Activated CD8-positive, alpha-beta T cell treated with anti-CD3 and anti-CD28 coated beads, Interleukin-2, amount 10 ng/mL, durations not matched to agents 7 days and 5 days (primary cell): ENCODE measurements at regions of chr15 and their contacts with region 1.

Region 1: GRCh38 chr15:63504247-63504978 is at the start of gene USP3:
- DNase-seq: peak; percentile 94
- ATAC-seq: peak; percentile 66
- H3K4me3 Mint-ChIP-seq: peak within 1 kb of the TSS; percentile 89
- H3K27ac Mint-ChIP-seq: peak within 1 kb of the TSS; percentile 98
- H3K4me1 Mint-ChIP-seq: peaks cover 81% of the 10 kb centered on the region
- H3K27me3 Mint-ChIP-seq: no peaks in the 10 kb centered on the region
- total RNA-seq, gene USP3: 48.3 to 49.1 TPM

Region 2: GRCh38 chr15:63381301-63382204 is 122.9 kb before region 1 on chr15 and contains the start of gene CA12:
- CTCF ChIA-PET with region 1: no interaction called
- POLR2A ChIA-PET with region 1: no interaction called
- DNase-seq: peak; percentile 28
- ATAC-seq: peak; percentile 88
- H3K4me3 Mint-ChIP-seq: peak within 1 kb of the TSS; percentile 56
- H3K27ac Mint-ChIP-seq: no peak within 1 kb of the TSS
- H3K4me1 Mint-ChIP-seq: peaks cover 11% of the 10 kb centered on the region
- H3K27me3 Mint-ChIP-seq: peaks cover 67% of the 10 kb centered on the region
- total RNA-seq, gene CA12: not detected

Region 3: DNA sequence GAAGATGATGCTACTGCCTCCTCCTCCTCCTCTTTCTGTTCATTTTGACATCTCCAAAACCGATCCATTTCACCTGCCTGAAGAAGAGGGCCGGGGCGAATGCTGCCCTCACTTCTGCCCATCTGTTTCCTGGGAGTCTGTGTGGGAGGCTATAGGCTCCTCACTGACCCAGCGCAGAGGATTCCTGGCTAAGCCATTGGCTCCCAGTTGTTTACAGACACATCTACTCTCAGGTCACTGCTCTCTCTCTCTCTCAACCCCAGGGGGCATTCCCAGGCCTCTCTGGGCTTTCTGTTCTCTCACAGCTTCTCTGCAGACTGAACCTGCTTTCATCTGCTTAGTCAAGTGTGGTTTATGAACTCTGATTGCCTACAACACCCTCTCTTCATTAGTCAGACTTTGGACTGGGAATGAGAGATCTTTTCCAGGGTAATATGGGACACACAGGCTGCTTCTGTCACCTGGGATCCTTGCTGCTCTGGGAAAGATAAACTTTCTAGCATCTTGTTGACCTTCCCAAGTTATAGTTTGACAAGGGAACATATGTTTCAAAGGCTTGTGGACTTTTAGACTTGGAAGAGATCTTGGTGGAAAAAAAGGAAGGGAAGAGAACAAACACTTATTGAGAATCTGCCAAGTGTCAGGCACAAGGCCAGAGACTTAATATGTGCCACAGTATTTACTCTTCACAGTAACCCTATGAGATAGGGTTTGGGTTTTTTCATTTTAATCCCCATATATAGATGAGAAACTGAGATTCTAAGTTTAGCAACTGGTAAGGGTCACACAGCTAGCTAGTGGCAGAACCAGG is 30.2 kb before region 1 on chr15:
- CTCF ChIA-PET with region 1: interaction called, 27 read pairs
- POLR2A ChIA-PET with region 1: interaction called, 36 read pairs
- DNase-seq: no peak
- ATAC-seq: peak; percentile 47
- H3K4me3 Mint-ChIP-seq: no peak overlapping the region
- H3K27ac Mint-ChIP-seq: peak overlapping the region; percentile 54
- H3K4me1 Mint-ChIP-seq: peaks cover 32% of the 10 kb centered on the region
- H3K27me3 Mint-ChIP-seq: no peaks in the 10 kb centered on the region

Region 4: DNA sequence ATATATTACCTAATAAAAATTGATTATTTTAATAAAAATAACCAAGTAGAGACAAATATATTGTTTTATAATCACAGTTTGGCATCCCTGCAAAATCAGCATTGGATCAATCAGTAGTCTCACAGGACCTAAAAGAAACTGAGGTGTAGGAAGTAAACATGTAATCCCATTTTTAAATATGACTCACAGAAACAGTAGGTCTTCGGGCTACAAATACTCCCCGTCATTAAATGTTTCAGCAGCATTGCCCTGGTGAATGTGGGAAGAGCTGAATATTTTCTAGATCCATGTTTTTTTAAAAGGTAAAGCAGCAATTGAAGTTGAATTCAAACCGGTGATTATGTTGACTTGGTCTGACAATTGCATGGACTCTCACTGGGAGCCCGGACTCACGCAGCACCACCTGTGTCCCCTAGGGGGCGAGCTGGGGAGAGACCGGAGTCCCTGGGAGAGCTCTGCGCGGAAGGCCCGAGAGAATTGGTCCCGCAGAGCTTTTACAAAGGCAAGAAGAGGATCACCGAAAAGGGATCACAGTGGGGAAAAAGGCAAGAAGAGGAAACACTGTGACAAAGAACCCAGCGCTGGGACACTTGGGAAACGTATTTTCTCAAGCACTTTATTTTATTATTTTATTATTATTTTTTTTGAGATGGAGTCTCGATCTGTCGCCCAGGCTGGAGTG is 17.2 kb before region 1 on chr15:
- CTCF ChIA-PET with region 1: interaction called, 172 read pairs
- POLR2A ChIA-PET with region 1: interaction called, 21 read pairs
- DNase-seq: peak; percentile 92
- ATAC-seq: peak; percentile 96
- H3K4me3 Mint-ChIP-seq: no peak overlapping the region
- H3K27ac Mint-ChIP-seq: peak overlapping the region; percentile 62
- H3K4me1 Mint-ChIP-seq: peaks cover 53% of the 10 kb centered on the region
- H3K27me3 Mint-ChIP-seq: no peaks in the 10 kb centered on the region

Region 5: GRCh38 chr15:63517614-63518013 is 13.2 kb after region 1 on chr15:
- CTCF ChIA-PET with region 1: interaction called, 10 read pairs
- POLR2A ChIA-PET with region 1: interaction called, 9 read pairs
- DNase-seq: no peak
- ATAC-seq: peak; percentile 53
- H3K4me3 Mint-ChIP-seq: no peak overlapping the region
- H3K27ac Mint-ChIP-seq: peak overlapping the region; percentile 54
- H3K4me1 Mint-ChIP-seq: peaks cover 48% of the 10 kb centered on the region
- H3K27me3 Mint-ChIP-seq: no peaks in the 10 kb centered on the region

Region 6: GRCh38 chr15:63600616-63601025 is 96.2 kb after region 1 on chr15:
- CTCF ChIA-PET with region 1: interaction called, 21 read pairs
- POLR2A ChIA-PET with region 1: interaction called, 17 read pairs
- DNase-seq: peak; percentile 90
- ATAC-seq: peak; percentile 81
- H3K4me3 Mint-ChIP-seq: peak overlapping the region; percentile 88
- H3K27ac Mint-ChIP-seq: peak overlapping the region; percentile 90
- H3K4me1 Mint-ChIP-seq: peaks cover 63% of the 10 kb centered on the region
- H3K27me3 Mint-ChIP-seq: peaks cover 3% of the 10 kb centered on the region

Region 7: GRCh38 chr15:63909819-63910437 is 405.5 kb after region 1 on chr15:
- CTCF ChIA-PET with region 1: no interaction called
- POLR2A ChIA-PET with region 1: no interaction called
- DNase-seq: no peak
- ATAC-seq: no peak
- H3K4me3 Mint-ChIP-seq: no peak overlapping the region
- H3K27ac Mint-ChIP-seq: no peak overlapping the region
- H3K4me1 Mint-ChIP-seq: peaks cover 27% of the 10 kb centered on the region
- H3K27me3 Mint-ChIP-seq: no peaks in the 10 kb centered on the region